Activated CD4-positive, alpha-beta T cell treated with anti-CD3 and anti-CD28 coated beads for 36 hours (primary cell): ENCODE measurements at regions of chr14 and their contacts with region 1.

Region 1: GRCh38 chr14:51677266-51677665 is 25.6 kb downstream of the FRMD6 start:
- DNase-seq: no peak
- ATAC-seq: no peak
- H3K4me3 Mint-ChIP-seq: no peak overlapping the region
- H3K27ac Mint-ChIP-seq: no peak overlapping the region
- H3K4me1 Mint-ChIP-seq: peaks cover 18% of the 10 kb centered on the region
- H3K27me3 Mint-ChIP-seq: peaks cover 7% of the 10 kb centered on the region

Region 2: GRCh38 chr14:51609955-51610283 is 67.3 kb before region 1 on chr14:
- CTCF ChIA-PET with region 1: no interaction called
- POLR2A ChIA-PET with region 1: no interaction called
- intact Hi-C with region 1: loop called in 1 of 2 experiments (anchors 5 kb)
- DNase-seq: no peak
- ATAC-seq: no peak
- H3K4me3 Mint-ChIP-seq: no peak overlapping the region
- H3K27ac Mint-ChIP-seq: no peak overlapping the region
- H3K4me1 Mint-ChIP-seq: peaks cover 18% of the 10 kb centered on the region
- H3K27me3 Mint-ChIP-seq: peaks cover 11% of the 10 kb centered on the region

Region 3: GRCh38 chr14:51630801-51631386 is 46.4 kb before region 1 on chr14:
- CTCF ChIA-PET with region 1: no interaction called
- POLR2A ChIA-PET with region 1: no interaction called
- intact Hi-C with region 1: loop called in 1 of 2 experiments (anchors 2 kb)
- DNase-seq: peak; percentile 44
- ATAC-seq: peak; percentile 82
- H3K4me3 Mint-ChIP-seq: no peak overlapping the region
- H3K27ac Mint-ChIP-seq: no peak overlapping the region
- H3K4me1 Mint-ChIP-seq: peaks cover 15% of the 10 kb centered on the region
- H3K27me3 Mint-ChIP-seq: peaks cover 7% of the 10 kb centered on the region

Region 4: GRCh38 chr14:51828017-51828797 is 150.9 kb after region 1 on chr14:
- CTCF ChIA-PET with region 1: no interaction called
- POLR2A ChIA-PET with region 1: no interaction called
- intact Hi-C with region 1: no loop called
- DNase-seq: peak; percentile 88
- ATAC-seq: peak; percentile 99
- H3K4me3 Mint-ChIP-seq: peak overlapping the region; percentile 11
- H3K27ac Mint-ChIP-seq: peak overlapping the region; percentile 62
- H3K4me1 Mint-ChIP-seq: no peaks in the 10 kb centered on the region
- H3K27me3 Mint-ChIP-seq: no peaks in the 10 kb centered on the region